CD8-positive, alpha-beta T cell (primary cell): ENCODE measurements at regions of chr1 and their contacts with region 1.

Region 1: GRCh38 chr1:26787706-26788514 is at the start of gene PIGV:
- DNase-seq: peak; percentile 80 to 96 (median 87)
- ATAC-seq: peak; percentile 68
- H3K4me3 ChIP-seq: peak within 1 kb of the TSS; percentile 91 to 95
- H3K4me3 Mint-ChIP-seq: peak within 1 kb of the TSS; percentile 99
- H3K27ac ChIP-seq: peak within 1 kb of the TSS; percentile 81 to 97
- H3K27ac Mint-ChIP-seq: peak within 1 kb of the TSS; percentile 100
- H3K4me1 ChIP-seq: peaks cover 52% of the 10 kb centered on the region
- H3K4me1 Mint-ChIP-seq: peaks cover 78% of the 10 kb centered on the region
- H3K27me3 ChIP-seq: no peaks in the 10 kb centered on the region
- H3K27me3 Mint-ChIP-seq: no peaks in the 10 kb centered on the region
- CTCF ChIP-seq: no peak
- total RNA-seq, gene PIGV: 9.5 to 12.7 TPM

Region 2: DNA sequence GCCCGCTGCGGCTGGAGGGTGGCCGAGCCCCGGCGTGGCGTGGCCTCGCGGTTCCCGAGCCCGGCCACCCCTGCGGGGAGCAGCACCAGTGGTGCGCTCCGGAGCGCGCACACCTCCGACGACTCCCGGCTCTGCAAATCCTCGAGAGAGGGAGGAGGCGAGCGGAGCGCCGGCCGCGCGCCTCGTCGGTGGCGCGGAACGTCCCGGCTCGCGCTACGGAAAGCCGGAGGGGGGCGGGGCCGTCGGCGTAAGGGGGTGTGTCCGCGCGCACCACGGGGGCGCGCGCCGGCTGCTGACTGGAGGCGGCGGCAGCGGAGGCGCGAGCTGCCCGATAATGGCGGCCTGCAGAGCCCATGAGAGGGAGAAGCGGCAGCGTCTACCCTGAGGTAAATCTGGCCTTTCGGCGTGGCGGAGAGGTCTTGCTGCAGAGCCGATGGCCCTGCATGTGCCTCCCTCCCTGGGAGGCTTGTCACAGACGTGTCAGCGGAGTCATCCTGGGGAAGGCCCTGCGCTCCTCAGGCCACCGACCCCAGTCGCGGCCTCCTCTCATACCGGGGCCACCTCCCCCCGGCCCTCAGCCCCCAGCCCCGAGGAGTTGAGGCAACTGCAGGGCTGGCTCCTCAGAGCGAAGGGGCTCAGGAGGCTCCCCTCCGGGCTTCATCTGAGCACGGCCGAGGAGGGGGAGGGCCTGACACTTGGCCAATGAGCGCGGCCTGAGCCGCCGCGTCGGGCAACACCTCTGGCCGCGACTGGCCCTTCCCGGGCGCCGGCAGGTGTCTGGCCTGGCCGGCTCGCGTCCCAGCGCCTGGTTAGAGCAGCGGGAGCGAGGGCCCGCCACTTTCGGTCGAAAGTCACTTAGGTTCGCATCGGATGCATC is 676.1 kb before region 1 on chr1 and contains the start of gene PDIK1L:
- CTCF ChIA-PET with region 1: no interaction called
- POLR2A ChIA-PET with region 1: no interaction called
- intact Hi-C with region 1: no loop called
- DNase-seq: peak; percentile 92 to 98 (median 94)
- ATAC-seq: peak; percentile 87
- H3K4me3 ChIP-seq: peak within 1 kb of the TSS; percentile 98 to 99
- H3K4me3 Mint-ChIP-seq: peak within 1 kb of the TSS; percentile 92
- H3K27ac ChIP-seq: peak within 1 kb of the TSS; percentile 65 to 79
- H3K27ac Mint-ChIP-seq: peak within 1 kb of the TSS; percentile 91
- H3K4me1 ChIP-seq: peaks cover 19% of the 10 kb centered on the region
- H3K4me1 Mint-ChIP-seq: peaks cover 30% of the 10 kb centered on the region
- H3K27me3 ChIP-seq: no peaks in the 10 kb centered on the region
- H3K27me3 Mint-ChIP-seq: no peaks in the 10 kb centered on the region
- CTCF ChIP-seq: no peak
- total RNA-seq, gene PDIK1L: 10.2 to 10.8 TPM

Region 3: GRCh38 chr1:26541816-26542711 is 245.8 kb before region 1 on chr1:
- CTCF ChIA-PET with region 1: interaction called, 14 read pairs
- POLR2A ChIA-PET with region 1: no interaction called
- intact Hi-C with region 1: loop called in 1 of 2 experiments (anchors 5 kb)
- DNase-seq: peak; percentile 45 to 90 (median 76)
- ATAC-seq: peak; percentile 71
- H3K4me3 ChIP-seq: peak overlapping the region; percentile 32 to 36
- H3K4me3 Mint-ChIP-seq: peak overlapping the region; percentile 81
- H3K27ac ChIP-seq: peak overlapping the region; percentile 56 to 85
- H3K27ac Mint-ChIP-seq: peak overlapping the region; percentile 97
- H3K4me1 ChIP-seq: peaks cover 87% of the 10 kb centered on the region
- H3K4me1 Mint-ChIP-seq: peaks cover 88% of the 10 kb centered on the region
- H3K27me3 ChIP-seq: no peaks in the 10 kb centered on the region
- H3K27me3 Mint-ChIP-seq: no peaks in the 10 kb centered on the region
- CTCF ChIP-seq: peak; percentile 65

Region 4: DNA sequence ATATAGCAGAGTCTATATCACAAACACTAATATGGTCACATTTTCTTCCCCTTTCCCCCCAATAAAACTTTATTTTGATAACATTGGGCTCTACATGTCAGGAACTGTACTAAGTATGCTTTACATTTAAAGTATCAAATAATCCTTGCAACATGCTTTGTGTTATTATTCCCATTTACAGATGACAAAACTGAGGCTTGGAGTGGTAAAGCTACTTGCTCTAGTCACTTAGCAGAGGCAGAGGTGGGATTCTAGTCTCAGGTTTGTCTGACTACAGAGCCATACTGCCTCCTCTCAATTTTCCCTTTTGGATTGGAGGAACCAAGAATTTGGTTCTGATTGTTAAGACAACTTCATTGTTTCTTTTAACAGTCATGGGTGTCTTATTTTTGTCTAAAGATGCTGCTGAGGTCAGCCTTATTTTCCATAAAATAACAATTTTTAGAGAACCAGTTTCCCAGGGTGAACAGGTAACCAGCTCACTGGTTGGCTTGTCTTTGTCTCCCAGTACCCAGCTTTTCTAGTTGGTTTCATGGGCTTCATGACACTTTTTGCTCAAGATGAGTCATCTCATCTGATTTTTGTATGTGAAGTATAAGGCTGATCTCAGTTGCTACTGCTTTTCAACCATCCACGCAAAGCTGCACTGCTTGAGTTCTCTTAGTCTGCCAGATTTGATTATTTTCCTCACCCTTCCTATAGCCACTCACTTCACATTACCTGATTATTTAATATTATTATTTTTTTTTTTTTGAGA is 173.1 kb before region 1 on chr1:
- CTCF ChIA-PET with region 1: interaction called, 439 read pairs
- POLR2A ChIA-PET with region 1: interaction called, 3 read pairs
- intact Hi-C with region 1: no loop called
- DNase-seq: no peak
- ATAC-seq: no peak
- H3K4me3 ChIP-seq: no peak overlapping the region
- H3K4me3 Mint-ChIP-seq: no peak overlapping the region
- H3K27ac ChIP-seq: no peak overlapping the region
- H3K27ac Mint-ChIP-seq: no peak overlapping the region
- H3K4me1 ChIP-seq: peaks cover 16% of the 10 kb centered on the region
- H3K4me1 Mint-ChIP-seq: peaks cover 18% of the 10 kb centered on the region
- H3K27me3 ChIP-seq: no peaks in the 10 kb centered on the region
- H3K27me3 Mint-ChIP-seq: no peaks in the 10 kb centered on the region
- CTCF ChIP-seq: no peak

Region 5: DNA sequence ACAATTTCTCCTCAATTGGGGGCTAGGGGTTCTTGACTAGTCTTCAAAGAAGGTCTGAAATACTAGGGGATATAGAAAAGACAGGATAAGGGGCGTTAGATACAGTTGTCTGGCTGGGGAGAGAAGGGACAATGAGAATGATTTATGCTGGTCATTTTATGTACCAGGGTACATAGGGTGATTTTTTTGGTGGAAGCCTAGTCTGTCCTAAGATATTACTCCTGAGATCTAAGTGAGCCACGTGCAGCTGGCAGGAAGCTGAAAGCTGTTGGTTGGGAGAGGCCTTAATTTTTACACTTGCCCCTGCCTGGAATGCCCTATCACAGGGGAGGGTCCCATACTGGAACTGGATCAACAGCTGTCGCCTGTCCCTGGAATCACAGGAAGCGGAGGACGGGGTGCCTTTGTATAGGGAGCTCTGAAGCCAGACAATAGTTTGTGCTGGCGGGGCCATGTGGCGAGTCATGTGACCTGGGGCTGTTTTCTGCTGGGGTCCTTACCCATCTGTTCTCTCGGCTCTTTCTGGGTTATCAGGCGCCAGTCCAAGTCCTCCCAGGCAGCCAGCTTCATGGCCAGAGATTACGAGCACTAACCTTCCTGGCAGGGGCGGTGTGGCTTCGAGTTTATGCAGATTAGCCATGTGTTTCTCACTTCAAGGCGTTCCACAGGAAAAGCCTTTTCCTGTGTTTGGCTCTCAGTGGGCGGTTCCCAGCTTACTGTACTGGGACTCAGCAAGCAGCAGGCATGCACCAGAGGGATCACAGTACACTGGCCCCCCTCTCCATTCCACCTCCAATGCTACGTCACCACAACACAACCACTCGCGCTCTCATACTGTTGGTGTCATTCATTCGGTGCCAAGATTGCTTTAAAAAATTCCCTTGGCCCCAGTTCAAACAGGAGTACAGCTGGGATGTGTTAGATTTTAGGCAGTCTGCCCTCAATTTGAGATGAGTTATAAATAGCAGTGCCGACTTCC is 64.6 kb before region 1 on chr1:
- CTCF ChIA-PET with region 1: interaction called, 20 read pairs
- POLR2A ChIA-PET with region 1: interaction called, 8 read pairs
- intact Hi-C with region 1: no loop called
- DNase-seq: peak in 8 of 9 experiments; percentile 21 to 82 (median 54)
- ATAC-seq: peak; percentile 79
- H3K4me3 ChIP-seq: peak overlapping the region; percentile 10 to 13
- H3K4me3 Mint-ChIP-seq: peak overlapping the region; percentile 63
- H3K27ac ChIP-seq: peak overlapping the region in 1 of 2 experiments; percentile 54
- H3K27ac Mint-ChIP-seq: peak overlapping the region; percentile 88
- H3K4me1 ChIP-seq: peaks cover 91% of the 10 kb centered on the region
- H3K4me1 Mint-ChIP-seq: peaks cover 93% of the 10 kb centered on the region
- H3K27me3 ChIP-seq: no peaks in the 10 kb centered on the region
- H3K27me3 Mint-ChIP-seq: no peaks in the 10 kb centered on the region
- CTCF ChIP-seq: no peak

Region 6: DNA sequence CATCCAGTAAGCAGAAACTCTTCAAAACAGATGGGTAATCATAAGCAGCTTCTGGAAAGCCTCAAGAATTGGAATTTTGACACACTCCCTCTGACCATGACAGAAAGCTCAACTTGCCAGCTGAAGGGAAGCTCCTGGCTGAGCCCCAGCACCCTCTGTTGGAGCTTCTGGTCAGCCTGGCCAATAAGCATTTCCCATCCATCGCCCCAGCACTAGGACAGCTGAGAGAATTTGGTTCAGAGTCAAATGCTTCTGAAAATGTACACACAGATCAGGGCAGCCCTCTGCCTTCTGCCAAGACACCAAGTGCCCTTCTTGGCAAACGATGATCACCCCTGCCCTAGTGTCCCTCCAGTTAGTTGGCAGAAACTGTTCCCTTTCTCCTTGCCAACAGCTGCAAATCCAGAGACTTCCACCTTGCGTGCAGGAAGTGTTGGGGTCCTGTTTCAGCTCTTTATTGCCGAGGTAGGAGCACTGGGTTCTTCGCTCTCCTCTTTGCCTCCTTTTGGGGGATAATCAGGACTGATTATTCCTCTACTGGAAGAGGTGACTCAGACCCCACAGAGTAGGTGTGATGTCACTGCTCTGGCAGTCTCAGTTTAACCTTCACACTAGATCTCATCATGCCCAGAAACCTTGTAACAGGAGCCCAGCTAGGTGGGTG is 11.7 kb after region 1 on chr1:
- CTCF ChIA-PET with region 1: interaction called, 65 read pairs
- POLR2A ChIA-PET with region 1: interaction called, 45 read pairs
- intact Hi-C with region 1: no loop called
- DNase-seq: peak in 5 of 9 experiments; percentile 20 to 63 (median 39)
- ATAC-seq: peak; percentile 69
- H3K4me3 ChIP-seq: no peak overlapping the region
- H3K4me3 Mint-ChIP-seq: peak overlapping the region; percentile 73
- H3K27ac ChIP-seq: peak overlapping the region; percentile 26 to 87
- H3K27ac Mint-ChIP-seq: peak overlapping the region; percentile 97
- H3K4me1 ChIP-seq: peaks cover 39% of the 10 kb centered on the region
- H3K4me1 Mint-ChIP-seq: peaks cover 36% of the 10 kb centered on the region
- H3K27me3 ChIP-seq: no peaks in the 10 kb centered on the region
- H3K27me3 Mint-ChIP-seq: no peaks in the 10 kb centered on the region
- CTCF ChIP-seq: no peak

Region 7: GRCh38 chr1:26833432-26834405 is 45.8 kb after region 1 on chr1:
- CTCF ChIA-PET with region 1: interaction called, 49 read pairs
- POLR2A ChIA-PET with region 1: interaction called, 3 read pairs
- intact Hi-C with region 1: loop called in 1 of 2 experiments (anchors 1 kb)
- DNase-seq: peak; percentile 74 to 99 (median 89)
- ATAC-seq: peak; percentile 94
- H3K4me3 ChIP-seq: peak overlapping the region; percentile 27 to 31
- H3K4me3 Mint-ChIP-seq: peak overlapping the region; percentile 73
- H3K27ac ChIP-seq: peak overlapping the region; percentile 88 to 98
- H3K27ac Mint-ChIP-seq: peak overlapping the region; percentile 100
- H3K4me1 ChIP-seq: peaks cover 51% of the 10 kb centered on the region
- H3K4me1 Mint-ChIP-seq: peaks cover 74% of the 10 kb centered on the region
- H3K27me3 ChIP-seq: no peaks in the 10 kb centered on the region
- H3K27me3 Mint-ChIP-seq: no peaks in the 10 kb centered on the region
- CTCF ChIP-seq: peak; percentile 53

Region 8: GRCh38 chr1:27940297-27940696 is 1152.4 kb after region 1 on chr1:
- CTCF ChIA-PET with region 1: no interaction called
- POLR2A ChIA-PET with region 1: no interaction called
- intact Hi-C with region 1: no loop called
- DNase-seq: peak; percentile 57 to 83 (median 77)
- ATAC-seq: peak; percentile 91
- H3K4me3 ChIP-seq: no peak overlapping the region
- H3K4me3 Mint-ChIP-seq: no peak overlapping the region
- H3K27ac ChIP-seq: peak overlapping the region in 1 of 2 experiments; percentile 40
- H3K27ac Mint-ChIP-seq: peak overlapping the region; percentile 74
- H3K4me1 ChIP-seq: peaks cover 21% of the 10 kb centered on the region
- H3K4me1 Mint-ChIP-seq: peaks cover 33% of the 10 kb centered on the region
- H3K27me3 ChIP-seq: no peaks in the 10 kb centered on the region
- H3K27me3 Mint-ChIP-seq: peaks cover 7% of the 10 kb centered on the region
- CTCF ChIP-seq: peak; percentile 63